ENCODE measurements at regions of chr22 and their contacts with region 1.

Region 1: GRCh38 chr22:41998361-41999275 is at the start of gene WBP2NL:
- DNase-seq: peak; percentile 88
- H3K4me3 Mint-ChIP-seq: peak within 1 kb of the TSS; percentile 91
- H3K27ac Mint-ChIP-seq: peak within 1 kb of the TSS; percentile 95
- H3K4me1 Mint-ChIP-seq: peaks cover 40% of the 10 kb centered on the region
- H3K27me3 Mint-ChIP-seq: peaks cover 1% of the 10 kb centered on the region
- total RNA-seq, gene WBP2NL: 1.5 and 2.3 TPM in 2 replicates

Region 2: GRCh38 chr22:41946629-41947423 is 51.8 kb before region 1 on chr22 and contains the start of gene CENPM:
- intact Hi-C with region 1: loop called (anchors 1 kb)
- DNase-seq: peak; percentile 93
- H3K4me3 Mint-ChIP-seq: peak within 1 kb of the TSS; percentile 92
- H3K27ac Mint-ChIP-seq: peak within 1 kb of the TSS; percentile 93
- H3K4me1 Mint-ChIP-seq: peaks cover 47% of the 10 kb centered on the region
- H3K27me3 Mint-ChIP-seq: no peaks in the 10 kb centered on the region
- total RNA-seq, gene CENPM: 82.0 and 84.6 TPM in 2 replicates

Region 3: DNA sequence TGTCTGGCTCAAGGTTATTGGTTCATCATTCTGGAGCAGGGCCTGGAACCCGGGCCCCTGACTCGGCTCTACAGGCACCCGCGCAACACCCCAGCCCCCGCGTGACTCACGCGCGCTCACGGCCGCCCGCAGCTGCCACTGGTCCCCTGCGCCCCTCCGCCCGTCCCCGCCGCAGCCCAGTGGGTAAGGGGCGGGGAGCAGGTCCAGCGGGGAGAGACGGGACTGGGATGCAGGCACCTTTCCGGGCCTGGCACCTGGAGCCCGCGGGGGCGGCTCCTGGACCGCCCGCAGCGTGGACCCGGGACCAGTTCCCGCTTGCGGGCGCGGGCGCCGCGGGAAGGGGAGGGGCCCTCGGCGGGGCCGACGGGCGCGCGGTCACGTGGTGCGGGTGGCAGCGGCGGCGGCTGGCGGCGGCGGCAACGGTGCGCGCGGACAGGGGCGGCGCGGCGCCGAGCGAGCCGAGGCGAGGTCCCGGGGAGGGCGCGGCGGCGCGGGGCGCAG is 22.2 kb before region 1 on chr22:
- intact Hi-C with region 1: loop called (anchors 1 kb)
- DNase-seq: peak; percentile 62
- H3K4me3 Mint-ChIP-seq: peak overlapping the region; percentile 70
- H3K27ac Mint-ChIP-seq: peak overlapping the region; percentile 3
- H3K4me1 Mint-ChIP-seq: peaks cover 21% of the 10 kb centered on the region
- H3K27me3 Mint-ChIP-seq: peaks cover 32% of the 10 kb centered on the region

Region 4: GRCh38 chr22:42033263-42034181 is 34.9 kb after region 1 on chr22:
- intact Hi-C with region 1: loop called (anchors 1 kb)
- DNase-seq: no peak
- H3K4me3 Mint-ChIP-seq: no peak overlapping the region
- H3K27ac Mint-ChIP-seq: no peak overlapping the region
- H3K4me1 Mint-ChIP-seq: peaks cover 40% of the 10 kb centered on the region
- H3K27me3 Mint-ChIP-seq: peaks cover 4% of the 10 kb centered on the region

Region 5: GRCh38 chr22:42079319-42080251 is 81.0 kb after region 1 on chr22 and contains the start of gene SMDT1:
- intact Hi-C with region 1: loop called (anchors 1 kb)
- DNase-seq: peak; percentile 98
- H3K4me3 Mint-ChIP-seq: peak within 1 kb of the TSS; percentile 89
- H3K27ac Mint-ChIP-seq: peak within 1 kb of the TSS; percentile 92
- H3K4me1 Mint-ChIP-seq: peaks cover 34% of the 10 kb centered on the region
- H3K27me3 Mint-ChIP-seq: no peaks in the 10 kb centered on the region
- total RNA-seq, gene SMDT1: 53.9 and 58.2 TPM in 2 replicates

Region 6: GRCh38 chr22:42444077-42444904 is 445.7 kb after region 1 on chr22:
- intact Hi-C with region 1: loop called (anchors 1 kb)
- DNase-seq: peak; percentile 76
- H3K4me3 Mint-ChIP-seq: peak overlapping the region; percentile 68
- H3K27ac Mint-ChIP-seq: peak overlapping the region; percentile 78
- H3K4me1 Mint-ChIP-seq: peaks cover 35% of the 10 kb centered on the region
- H3K27me3 Mint-ChIP-seq: peaks cover 5% of the 10 kb centered on the region

Measured in activated T-helper 1 cell treated with anti-CD3 and anti-CD28 coated beads, Interleukin-12 subunit alpha, Interleukin-12 subunit beta, Interleukin-2, Interleukin-4 antibody, amounts not matched to agents 30 ng/mL and 10 ng/mL and 1 ng/mL, durations not matched to agents 14 hours and 24 hours and 36 hours (primary cell).